ENCODE measurements at regions of chr16 and their contacts with region 1.

Region 1: DNA sequence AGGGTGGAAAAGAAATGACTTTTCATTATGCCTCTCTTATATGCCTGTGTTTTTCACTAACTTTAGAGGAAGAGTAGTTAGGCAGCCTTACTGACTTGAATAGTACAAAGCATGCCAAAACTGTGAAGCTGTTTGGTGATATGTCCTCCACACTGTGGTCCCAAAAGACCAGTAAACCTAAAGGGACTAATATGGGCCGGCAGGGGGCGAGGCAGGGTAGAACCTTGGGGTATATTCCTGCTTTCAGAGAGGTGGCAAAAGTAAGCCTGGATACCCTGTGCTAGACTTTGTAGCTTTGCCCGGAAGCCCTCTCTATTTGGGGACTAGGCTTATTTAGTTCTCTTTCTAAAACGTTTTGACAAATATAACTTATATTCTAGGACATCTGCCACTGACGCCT is 36.5 kb upstream of the VWA3A start:
- DNase-seq: peak; percentile 32 to 47 (median 38)
- ATAC-seq: peak; percentile 90
- H3K4me3 ChIP-seq: no peak overlapping the region
- H3K27ac ChIP-seq: no peak overlapping the region
- H3K4me1 ChIP-seq: peaks cover 0 to 5% of the 10 kb centered on the region in 2 experiments; a peak in 3 of 5 replicates
- H3K27me3 ChIP-seq: no peaks in the 10 kb centered on the region
- CTCF ChIP-seq: peak; percentile 48 to 54 (median 51)
- EP300 ChIP-seq: no peak
- POLR2A ChIP-seq: no peak
- RAD21 ChIP-seq: peak in 1 of 2 experiments; percentile 24; a peak in 1 of 4 replicates

Region 2: GRCh38 chr16:21989133-21989532 is 66.7 kb before region 1 on chr16:
- CTCF ChIA-PET with region 1: no interaction called
- POLR2A ChIA-PET with region 1: no interaction called
- in situ Hi-C with region 1: no loop called
- intact Hi-C with region 1: no loop called
- DNase-seq: no peak
- ATAC-seq: no peak
- H3K4me3 ChIP-seq: no peak overlapping the region
- H3K27ac ChIP-seq: no peak overlapping the region
- H3K4me1 ChIP-seq: peaks cover 0 to under 1% of the 10 kb centered on the region in 2 experiments; a peak in 2 of 5 replicates
- H3K27me3 ChIP-seq: no peaks in the 10 kb centered on the region
- CTCF ChIP-seq: no peak
- EP300 ChIP-seq: no peak
- POLR2A ChIP-seq: no peak
- RAD21 ChIP-seq: no peak

Region 3: GRCh38 chr16:22077700-22078313 is 21.9 kb after region 1 on chr16:
- CTCF ChIA-PET with region 1: no interaction called
- POLR2A ChIA-PET with region 1: interaction called, 3 read pairs
- in situ Hi-C with region 1: no loop called
- intact Hi-C with region 1: loop called (anchors 2 kb)
- DNase-seq: peak; percentile 68 to 74 (median 69)
- ATAC-seq: peak; percentile 86
- H3K4me3 ChIP-seq: no peak overlapping the region
- H3K27ac ChIP-seq: no peak overlapping the region
- H3K4me1 ChIP-seq: no peaks in the 10 kb centered on the region
- H3K27me3 ChIP-seq: no peaks in the 10 kb centered on the region
- CTCF ChIP-seq: peak; percentile 76 to 88 (median 85)
- EP300 ChIP-seq: no peak
- POLR2A ChIP-seq: no peak
- RAD21 ChIP-seq: peak; percentile 83 to 88

Region 4: DNA sequence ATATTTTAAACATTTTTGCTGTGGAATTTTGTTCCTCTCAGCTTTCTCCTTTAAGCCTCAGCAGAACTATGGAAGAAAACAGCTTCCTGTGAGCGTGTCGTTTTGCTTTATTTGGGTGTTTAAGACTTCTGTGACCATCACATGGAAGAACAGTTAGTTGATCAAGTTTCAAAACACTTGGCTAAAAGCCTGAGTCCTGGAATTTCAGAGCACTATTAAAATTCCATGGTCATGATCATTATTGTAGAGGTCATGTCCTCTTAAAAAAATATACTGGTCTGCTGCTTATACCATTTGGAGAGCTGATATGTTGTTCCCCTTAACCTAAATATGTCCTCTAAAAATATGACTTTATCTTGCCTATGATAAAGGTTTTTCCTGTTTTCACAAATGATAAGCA is 331.1 kb after region 1 on chr16:
- CTCF ChIA-PET with region 1: no interaction called
- POLR2A ChIA-PET with region 1: no interaction called
- in situ Hi-C with region 1: no loop called
- intact Hi-C with region 1: no loop called
- DNase-seq: no peak
- ATAC-seq: no peak
- H3K4me3 ChIP-seq: no peak overlapping the region
- H3K27ac ChIP-seq: no peak overlapping the region
- H3K4me1 ChIP-seq: peaks cover 4 to 12% of the 10 kb centered on the region in 2 experiments; a peak in 4 of 5 replicates
- H3K27me3 ChIP-seq: no peaks in the 10 kb centered on the region
- CTCF ChIP-seq: no peak
- EP300 ChIP-seq: no peak
- POLR2A ChIP-seq: no peak
- RAD21 ChIP-seq: no peak